WTC11 (cell line): ENCODE measurements at regions of chr19 and their contacts with region 1.

Region 1: DNA sequence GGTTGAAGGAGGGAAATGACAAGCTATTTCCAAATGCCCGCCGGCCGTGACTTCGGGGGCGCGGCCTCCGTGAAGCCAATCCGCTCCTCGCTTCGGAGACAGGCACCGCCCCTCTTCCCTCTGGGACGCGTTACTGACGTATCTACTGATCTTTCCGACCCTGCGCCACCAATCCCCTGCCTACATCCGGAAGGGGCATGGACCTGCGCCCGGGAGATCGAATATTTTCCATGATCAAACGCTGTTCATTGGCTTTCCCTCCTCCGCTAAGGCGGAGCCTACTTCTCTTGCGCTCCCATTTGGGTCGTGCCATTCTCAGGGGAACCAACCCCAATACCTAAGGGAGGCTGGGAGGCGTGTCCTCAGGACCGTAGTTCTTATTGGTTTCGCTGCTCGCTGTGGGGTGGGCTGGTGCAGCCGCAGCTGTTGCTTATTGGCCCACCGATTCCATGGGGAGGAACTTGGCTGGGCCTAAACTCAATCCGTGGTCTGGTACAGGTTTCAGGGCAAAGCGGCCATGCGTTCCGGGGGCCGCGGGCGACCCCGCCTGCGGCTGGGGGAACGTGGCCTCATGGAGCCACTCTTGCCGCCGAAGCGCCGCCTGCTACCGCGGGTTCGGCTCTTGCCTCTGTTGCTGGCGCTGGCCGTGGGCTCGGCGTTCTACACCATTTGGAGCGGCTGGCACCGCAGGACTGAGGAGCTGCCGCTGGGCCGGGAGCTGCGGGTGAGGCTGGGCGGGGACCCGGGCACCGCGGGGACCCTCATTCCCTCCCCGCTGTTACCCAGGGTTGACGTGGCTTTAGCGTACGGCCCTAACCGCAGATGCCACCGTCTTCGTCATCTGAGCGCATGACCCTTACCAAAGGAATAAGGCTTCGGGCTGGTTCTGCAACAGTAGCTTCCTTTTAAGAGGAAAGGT is at the start of gene QPCTL:
- DNase-seq: peak; percentile 97
- ATAC-seq: peak; percentile 95
- H3K4me3 Mint-ChIP-seq: peak within 1 kb of the TSS; percentile 96
- H3K27ac Mint-ChIP-seq: peak within 1 kb of the TSS; percentile 100
- H3K4me1 Mint-ChIP-seq: peaks cover 6% of the 10 kb centered on the region; the same call in 1 of the 2 replicates
- H3K27me3 Mint-ChIP-seq: peaks cover 3% of the 10 kb centered on the region; the same call in 1 of the 2 replicates
- CTCF ChIP-seq: no peak
- total RNA-seq, gene QPCTL: 23.8 to 33.3 TPM (median 27.5 TPM) in 3 replicates

Region 2: DNA sequence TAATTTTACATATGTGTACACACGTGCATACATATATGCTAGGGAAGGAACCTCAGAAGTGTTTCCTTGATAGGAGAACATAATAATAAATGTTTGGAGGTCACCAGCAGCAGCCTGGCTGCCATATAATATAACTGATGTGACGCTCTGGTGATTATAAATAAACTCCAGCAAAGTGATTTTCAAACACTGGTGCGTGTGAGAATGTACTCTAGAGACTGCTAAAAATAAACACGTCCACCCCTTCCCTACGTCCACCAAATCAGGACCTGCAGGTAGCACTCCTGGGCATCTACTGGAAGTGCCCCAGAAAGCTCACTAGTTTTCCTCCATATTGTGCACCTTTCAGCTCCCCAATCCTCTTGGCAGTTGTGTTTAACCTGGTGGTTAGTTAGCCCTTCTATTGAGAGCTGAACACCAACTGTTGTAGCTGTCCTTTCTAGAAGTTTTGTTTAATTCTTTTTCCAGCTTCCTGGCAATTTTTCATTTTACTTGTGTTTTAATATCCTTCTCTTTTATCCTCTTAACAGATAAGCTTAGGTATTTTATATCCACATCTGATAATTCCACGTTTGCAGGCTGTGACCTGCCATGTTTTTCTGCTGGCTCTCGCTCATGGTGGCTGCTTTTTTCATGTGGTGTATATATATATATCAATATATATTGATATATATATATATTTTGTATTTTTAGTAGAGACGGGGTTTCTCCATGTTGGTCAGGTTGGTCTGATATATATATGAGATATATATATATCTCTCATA is 120.8 kb before region 1 on chr19:
- CTCF ChIA-PET with region 1: no interaction called
- POLR2A ChIA-PET with region 1: no interaction called
- DNase-seq: no peak
- ATAC-seq: no peak
- H3K4me3 Mint-ChIP-seq: no peak overlapping the region
- H3K27ac Mint-ChIP-seq: no peak overlapping the region
- H3K4me1 Mint-ChIP-seq: peaks cover 5% of the 10 kb centered on the region
- H3K27me3 Mint-ChIP-seq: no peaks in the 10 kb centered on the region
- CTCF ChIP-seq: no peak

Region 3: DNA sequence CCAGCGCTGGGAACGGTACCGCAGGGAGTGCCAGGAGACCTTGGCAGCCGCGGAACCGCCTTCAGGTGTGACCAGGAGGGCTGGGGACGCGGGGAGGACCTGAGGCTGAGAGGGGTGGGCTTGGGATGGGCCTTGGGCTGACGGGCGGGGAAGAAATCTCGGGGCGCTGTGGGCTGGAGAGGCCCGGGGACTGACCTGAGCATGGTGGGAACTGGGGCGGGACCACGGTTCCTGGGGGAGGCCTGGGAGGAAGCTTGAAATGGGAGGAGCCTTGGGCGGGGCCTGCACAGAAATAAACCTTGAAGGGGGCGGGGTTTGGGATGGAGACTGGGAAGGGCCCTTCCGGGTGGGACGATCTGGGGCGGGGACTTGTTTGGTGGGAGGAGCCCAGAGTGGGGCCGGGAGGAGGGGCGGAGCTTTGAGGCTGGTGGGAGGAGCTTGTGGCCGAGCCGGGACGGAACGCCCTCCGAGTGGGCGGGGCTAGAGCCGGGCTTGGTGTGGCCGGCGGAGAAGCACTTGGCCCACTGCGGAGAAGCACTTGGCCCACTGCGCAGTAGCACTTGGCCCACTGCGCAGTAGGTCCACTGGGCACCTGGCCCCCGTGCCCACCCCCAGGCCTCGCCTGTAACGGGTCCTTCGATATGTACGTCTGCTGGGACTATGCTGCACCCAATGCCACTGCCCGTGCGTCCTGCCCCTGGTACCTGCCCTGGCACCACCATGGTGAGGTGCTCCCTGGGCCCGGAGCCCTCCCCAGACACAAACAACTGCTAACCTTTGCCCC is 21.6 kb before region 1 on chr19:
- CTCF ChIA-PET with region 1: interaction called, 17 read pairs
- POLR2A ChIA-PET with region 1: interaction called, 12 read pairs
- DNase-seq: peak; percentile 98
- ATAC-seq: peak; percentile 90
- H3K4me3 Mint-ChIP-seq: peak overlapping the region; percentile 73
- H3K27ac Mint-ChIP-seq: no peak overlapping the region
- H3K4me1 Mint-ChIP-seq: peaks cover 27% of the 10 kb centered on the region
- H3K27me3 Mint-ChIP-seq: peaks cover 72% of the 10 kb centered on the region
- CTCF ChIP-seq: no peak

Region 4: GRCh38 chr19:45705115-45705514 is 12.7 kb after region 1 on chr19:
- CTCF ChIA-PET with region 1: interaction called, 14 read pairs
- POLR2A ChIA-PET with region 1: interaction called, 5 read pairs
- DNase-seq: no peak
- ATAC-seq: 0 out of 2 replicates have a peak, but pooled peaks have one; percentile 13
- H3K4me3 Mint-ChIP-seq: no peak overlapping the region
- H3K27ac Mint-ChIP-seq: no peak overlapping the region; the same call in 1 of the 2 replicates
- H3K4me1 Mint-ChIP-seq: no peaks in the 10 kb centered on the region
- H3K27me3 Mint-ChIP-seq: no peaks in the 10 kb centered on the region
- CTCF ChIP-seq: no peak

Region 5: GRCh38 chr19:45717166-45717982 is 24.9 kb after region 1 on chr19:
- CTCF ChIA-PET with region 1: interaction called, 34 read pairs
- POLR2A ChIA-PET with region 1: interaction called, 38 read pairs
- DNase-seq: peak; percentile 99
- ATAC-seq: peak; percentile 98
- H3K4me3 Mint-ChIP-seq: peak overlapping the region; percentile 97
- H3K27ac Mint-ChIP-seq: peak overlapping the region; percentile 97
- H3K4me1 Mint-ChIP-seq: peaks cover 25% of the 10 kb centered on the region
- H3K27me3 Mint-ChIP-seq: no peaks in the 10 kb centered on the region; the same call in 1 of the 2 replicates
- CTCF ChIP-seq: no peak

Region 6: GRCh38 chr19:45753546-45753945 is 61.1 kb after region 1 on chr19:
- CTCF ChIA-PET with region 1: interaction called, 11 read pairs
- POLR2A ChIA-PET with region 1: no interaction called
- DNase-seq: peak; percentile 73
- ATAC-seq: peak; percentile 95
- H3K4me3 Mint-ChIP-seq: no peak overlapping the region
- H3K27ac Mint-ChIP-seq: no peak overlapping the region
- H3K4me1 Mint-ChIP-seq: peaks cover 3% of the 10 kb centered on the region
- H3K27me3 Mint-ChIP-seq: peaks cover 12% of the 10 kb centered on the region
- CTCF ChIP-seq: no peak

Region 7: DNA sequence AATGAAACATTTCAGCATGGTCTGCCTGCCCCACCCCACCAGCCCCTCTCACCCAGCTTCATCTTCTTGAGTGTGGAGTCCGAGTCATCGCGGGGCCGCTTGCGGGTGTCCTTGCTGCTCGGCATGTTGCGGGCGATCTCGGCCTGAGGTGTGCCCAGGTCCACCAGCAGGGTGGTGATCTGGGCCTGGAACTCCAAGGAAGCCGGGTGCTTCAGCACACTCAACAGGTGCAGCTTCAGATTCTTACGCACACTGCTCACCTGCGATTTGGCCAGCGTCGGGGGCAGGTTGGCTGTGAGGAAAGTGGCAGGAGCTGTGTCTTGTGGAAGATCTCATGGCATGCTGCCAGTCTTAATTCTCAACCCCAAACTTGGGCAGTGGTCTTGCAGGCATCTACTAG is 149.8 kb after region 1 on chr19:
- CTCF ChIA-PET with region 1: no interaction called
- POLR2A ChIA-PET with region 1: no interaction called
- DNase-seq: no peak
- ATAC-seq: no peak
- H3K4me3 Mint-ChIP-seq: no peak overlapping the region
- H3K27ac Mint-ChIP-seq: no peak overlapping the region
- H3K4me1 Mint-ChIP-seq: no peaks in the 10 kb centered on the region
- H3K27me3 Mint-ChIP-seq: no peaks in the 10 kb centered on the region
- CTCF ChIP-seq: no peak